ENCODE measurements at regions of chr7 and their contacts with region 1.

Region 1: DNA sequence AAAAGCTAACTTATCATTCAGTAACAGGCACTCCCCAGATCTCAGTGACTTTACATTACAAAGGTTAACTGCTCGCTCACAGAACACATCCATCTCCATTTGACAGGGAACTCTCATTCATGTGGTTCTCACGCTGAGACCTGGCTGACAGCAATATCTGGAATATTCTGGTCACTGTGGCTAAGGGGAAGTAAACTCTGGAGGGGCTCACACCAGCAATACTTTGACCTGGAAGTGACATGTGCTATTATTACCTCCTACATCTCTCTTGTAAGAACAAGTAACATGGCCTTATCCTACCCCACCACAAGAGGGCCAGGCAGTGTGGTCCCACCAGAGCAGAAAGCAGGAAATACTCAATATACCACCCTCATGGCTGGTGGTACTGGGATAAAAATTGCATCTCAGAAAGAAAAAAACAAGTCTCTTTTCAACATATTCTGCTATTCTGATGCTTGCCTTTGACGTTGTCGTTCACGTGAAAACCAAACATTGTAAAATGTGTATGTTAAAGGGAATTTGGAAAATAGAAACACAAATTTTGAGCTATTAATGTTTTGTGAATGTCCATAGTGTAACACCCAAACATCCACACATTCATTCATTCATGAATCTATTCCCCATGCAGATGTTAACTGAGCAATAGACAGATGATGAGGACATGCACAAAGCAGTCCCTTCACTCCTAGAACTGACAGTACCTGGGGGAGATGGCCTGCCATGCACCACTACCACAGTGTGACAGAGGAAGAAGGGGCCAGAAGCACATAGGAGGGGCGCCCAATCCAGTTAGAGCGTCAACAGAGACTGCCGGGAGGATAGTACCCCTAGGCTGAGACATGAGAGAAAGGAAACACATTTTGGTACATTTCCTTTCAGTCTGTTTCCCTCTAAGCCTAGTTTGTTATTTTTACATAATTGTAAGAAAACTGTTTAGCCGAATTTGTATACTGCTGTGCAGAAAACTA is 166.0 kb upstream of the SP4 start:
- DNase-seq: peak; percentile 25
- H3K4me3 ChIP-seq: no peak overlapping the region
- H3K27ac ChIP-seq: no peak overlapping the region
- H3K4me1 ChIP-seq: no peaks in the 10 kb centered on the region
- H3K27me3 ChIP-seq: peaks cover 20% of the 10 kb centered on the region
- CTCF ChIP-seq: peak; percentile 30 to 48 (median 39)
- EP300 ChIP-seq: no peak
- POLR2A ChIP-seq: no peak

Region 2: DNA sequence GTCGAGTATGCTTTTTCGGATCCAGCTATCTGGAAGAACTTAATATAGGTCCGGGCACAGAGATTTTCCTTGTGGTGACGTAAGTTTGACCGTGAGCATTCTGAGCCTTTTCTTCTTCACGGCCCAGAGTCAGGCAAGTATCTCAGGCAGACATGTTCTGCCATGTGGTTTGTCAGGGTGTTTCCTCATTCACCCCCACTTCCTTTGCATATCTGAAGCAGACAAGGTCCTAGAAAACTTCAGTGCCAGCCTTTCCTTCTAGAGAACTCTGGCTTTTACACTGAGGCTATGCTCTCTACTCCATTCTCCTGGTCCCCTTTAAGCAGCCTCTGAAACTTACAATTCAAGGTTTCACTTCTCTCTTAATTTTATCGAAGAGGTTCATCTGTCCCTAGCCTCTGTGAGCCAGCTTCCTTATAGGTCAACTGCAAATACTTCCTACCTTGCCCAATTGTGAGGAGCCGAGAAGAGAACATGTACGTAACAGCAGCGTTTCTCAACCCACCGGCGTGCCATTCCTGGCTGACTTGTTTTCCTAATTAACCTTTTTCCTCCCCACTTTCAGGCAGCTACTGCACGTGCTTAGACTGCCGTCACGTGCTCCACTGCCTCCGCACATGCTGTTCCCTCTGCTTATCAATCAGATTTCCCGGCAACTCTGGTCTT is 636.5 kb after region 1 on chr7:
- in situ Hi-C with region 1: no loop called
- intact Hi-C with region 1: no loop called
- DNase-seq: no peak
- H3K4me3 ChIP-seq: no peak overlapping the region
- H3K27ac ChIP-seq: peak overlapping the region in 2 of 4 donors; percentile 51 to 52
- H3K4me1 ChIP-seq: no peaks in the 10 kb centered on the region
- H3K27me3 ChIP-seq: no peaks in the 10 kb centered on the region
- CTCF ChIP-seq: no peak
- EP300 ChIP-seq: no peak
- POLR2A ChIP-seq: no peak

Region 3: DNA sequence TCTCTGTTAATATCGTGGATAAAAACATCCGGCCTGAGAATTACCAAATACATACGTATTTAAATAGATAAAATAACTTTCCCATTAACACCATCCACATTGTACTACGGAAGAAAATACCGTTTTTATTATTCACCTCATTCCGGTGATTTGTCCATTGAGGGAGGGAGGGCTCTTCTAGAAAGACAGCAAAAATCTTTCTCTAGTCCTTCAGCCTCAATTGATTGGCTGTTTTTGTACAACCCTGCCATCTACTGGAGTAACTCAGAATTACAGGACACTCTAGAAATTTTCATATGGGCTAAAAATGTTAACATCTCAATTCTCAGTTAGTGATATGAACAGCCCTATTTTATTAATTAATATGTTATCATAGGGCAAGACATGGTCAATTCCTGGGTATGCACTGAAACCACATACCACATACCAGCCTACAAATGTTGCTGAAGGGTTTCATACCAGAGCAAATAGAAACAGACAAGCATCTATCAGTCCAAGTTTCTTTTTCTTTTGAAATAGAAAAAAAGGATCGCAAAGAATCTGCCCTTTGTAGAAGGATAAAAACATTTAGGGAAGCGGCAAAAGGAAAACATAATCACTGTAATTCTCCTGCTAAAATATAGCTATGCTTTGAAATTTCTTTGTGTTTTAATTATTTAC is 739.6 kb after region 1 on chr7:
- in situ Hi-C with region 1: loop called in 1 of 4 experiments (anchors 25 kb)
- intact Hi-C with region 1: no loop called
- DNase-seq: no peak
- H3K4me3 ChIP-seq: no peak overlapping the region
- H3K27ac ChIP-seq: no peak overlapping the region
- H3K4me1 ChIP-seq: no peaks in the 10 kb centered on the region
- H3K27me3 ChIP-seq: no peaks in the 10 kb centered on the region
- CTCF ChIP-seq: peak; percentile 72 to 86 (median 81)
- EP300 ChIP-seq: no peak
- POLR2A ChIP-seq: no peak